MCF 10A (cell line): ENCODE measurements at regions of chr7 and their contacts with region 1.

Region 1: GRCh38 chr7:100132697-100133151 is 6.0 kb downstream of the MBLAC1 start:
- DNase-seq: peak; percentile 71
- H3K4me3 Mint-ChIP-seq: no peak overlapping the region
- H3K27ac Mint-ChIP-seq: no peak overlapping the region
- H3K4me1 Mint-ChIP-seq: peaks cover 11% of the 10 kb centered on the region
- H3K27me3 Mint-ChIP-seq: peaks cover 10% of the 10 kb centered on the region
- CTCF ChIP-seq: peak; percentile 93

Region 2: GRCh38 chr7:99648843-99649242 is 483.9 kb before region 1 on chr7:
- CTCF ChIA-PET with region 1: no interaction called
- POLR2A ChIA-PET with region 1: no interaction called
- intact Hi-C with region 1: no loop called
- DNase-seq: no peak
- H3K4me3 Mint-ChIP-seq: no peak overlapping the region
- H3K27ac Mint-ChIP-seq: no peak overlapping the region
- H3K4me1 Mint-ChIP-seq: no peaks in the 10 kb centered on the region
- H3K27me3 Mint-ChIP-seq: no peaks in the 10 kb centered on the region
- CTCF ChIP-seq: no peak

Region 3: DNA sequence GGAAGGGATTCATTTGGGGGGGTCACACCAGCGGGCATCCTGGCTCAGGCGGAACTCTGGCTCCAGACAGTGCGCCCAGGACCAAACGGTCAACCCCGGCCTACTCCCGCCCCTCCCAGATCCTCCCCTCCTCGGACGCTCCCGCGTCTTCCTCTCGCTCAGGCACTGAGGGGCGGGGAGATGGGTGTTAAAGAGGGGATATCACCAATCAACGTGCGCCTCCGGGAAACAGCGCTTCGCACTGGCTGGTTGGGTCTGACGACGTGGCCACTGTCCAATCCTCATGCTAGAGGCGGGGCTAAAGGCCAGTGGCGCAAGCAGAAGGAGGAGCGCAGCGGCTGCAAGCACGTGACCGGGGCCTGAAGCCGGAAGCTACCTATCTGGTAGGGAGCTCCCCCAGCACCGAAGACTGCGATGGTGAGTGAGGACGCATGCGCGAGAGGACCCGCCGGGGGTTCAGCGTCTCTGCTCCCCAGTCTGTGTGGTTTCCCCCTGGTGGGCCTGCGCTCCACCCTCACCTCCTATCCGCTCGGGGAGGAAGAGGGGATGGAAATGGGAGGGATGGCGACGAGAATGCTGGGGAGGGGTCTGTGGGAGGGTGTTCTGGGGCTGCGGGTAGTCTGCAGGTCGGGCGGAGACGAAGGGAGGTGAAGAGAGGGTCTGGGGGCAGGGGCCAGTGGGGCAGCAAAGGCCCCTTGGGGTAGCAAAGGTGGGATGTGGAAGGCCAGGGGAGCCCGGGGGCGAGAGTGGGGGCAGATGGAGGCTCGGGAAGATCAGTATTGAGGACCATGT is 16.0 kb after region 1 on chr7 and contains the start of gene LAMTOR4:
- CTCF ChIA-PET with region 1: interaction called, 34 read pairs
- POLR2A ChIA-PET with region 1: interaction called, 6 read pairs
- intact Hi-C with region 1: no loop called
- DNase-seq: peak; percentile 99
- H3K4me3 Mint-ChIP-seq: peak within 1 kb of the TSS; percentile 92
- H3K27ac Mint-ChIP-seq: peak within 1 kb of the TSS; percentile 82
- H3K4me1 Mint-ChIP-seq: peaks cover 14% of the 10 kb centered on the region
- H3K27me3 Mint-ChIP-seq: no peaks in the 10 kb centered on the region
- CTCF ChIP-seq: no peak
- total RNA-seq, gene LAMTOR4: 76.6 and 87.3 TPM in 2 replicates

Region 4: GRCh38 chr7:100200693-100201092 is 68.0 kb after region 1 on chr7:
- CTCF ChIA-PET with region 1: interaction called, 10 read pairs
- POLR2A ChIA-PET with region 1: no interaction called
- intact Hi-C with region 1: no loop called
- DNase-seq: no peak
- H3K4me3 Mint-ChIP-seq: no peak overlapping the region
- H3K27ac Mint-ChIP-seq: no peak overlapping the region
- H3K4me1 Mint-ChIP-seq: no peaks in the 10 kb centered on the region
- H3K27me3 Mint-ChIP-seq: peaks cover 66% of the 10 kb centered on the region
- CTCF ChIP-seq: no peak

Region 5: GRCh38 chr7:100342765-100343164 is 210.0 kb after region 1 on chr7:
- CTCF ChIA-PET with region 1: interaction called, 7 read pairs
- POLR2A ChIA-PET with region 1: no interaction called
- intact Hi-C with region 1: loop called (anchors 10 kb)
- DNase-seq: no peak
- H3K4me3 Mint-ChIP-seq: no peak overlapping the region
- H3K27ac Mint-ChIP-seq: no peak overlapping the region
- H3K4me1 Mint-ChIP-seq: peaks cover 27% of the 10 kb centered on the region
- H3K27me3 Mint-ChIP-seq: no peaks in the 10 kb centered on the region
- CTCF ChIP-seq: no peak